ENCODE measurements at regions of chr12 and their contacts with region 1.

Region 1: DNA sequence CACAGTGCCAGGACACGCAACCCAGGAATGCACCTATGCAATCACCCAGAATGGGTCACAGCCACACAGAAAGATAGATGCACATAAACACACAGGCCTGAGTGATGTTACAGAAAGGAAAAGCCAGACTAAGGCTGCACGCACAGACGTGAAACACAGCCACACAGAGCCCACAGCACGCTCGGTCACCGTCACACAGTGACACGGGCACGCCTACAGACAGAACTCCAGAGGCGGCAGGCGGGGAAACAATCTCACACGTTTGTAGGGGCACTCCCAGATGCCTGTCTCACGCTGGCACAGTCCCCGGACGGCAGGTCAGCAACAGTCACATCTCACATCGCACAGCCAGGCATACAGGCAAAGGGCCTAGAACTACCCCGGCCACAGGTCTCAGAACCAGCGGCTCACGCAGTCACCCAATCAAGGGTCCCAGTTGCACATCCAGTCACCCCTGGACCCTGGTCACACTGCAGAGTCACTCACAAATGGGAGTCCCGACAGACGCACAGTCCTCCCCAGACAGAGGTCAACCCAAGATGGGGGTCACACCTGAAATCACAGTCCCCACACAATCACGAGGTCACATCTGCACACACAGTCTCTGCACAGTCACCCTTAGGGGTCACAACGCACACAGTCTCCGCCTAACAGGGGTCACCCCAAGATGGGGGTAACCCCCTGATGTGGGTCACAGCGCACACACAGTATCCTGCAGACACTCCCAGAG is 790 bp downstream of the SSH1 start:
- DNase-seq: peak; percentile 52 to 87 (median 59)
- H3K4me3 ChIP-seq: peak overlapping the region; percentile 54 to 74
- H3K4me3 Mint-ChIP-seq: peak overlapping the region; percentile 93 to 98 (median 96)
- H3K27ac ChIP-seq: peak overlapping the region; percentile 67
- H3K27ac Mint-ChIP-seq: peak overlapping the region; percentile 83 to 99 (median 96)
- H3K4me1 ChIP-seq: peaks cover 30% of the 10 kb centered on the region
- H3K4me1 Mint-ChIP-seq: peaks cover 30 to 45% (median 38%) of the 10 kb centered on the region in 4 donors
- H3K27me3 ChIP-seq: no peaks in the 10 kb centered on the region
- H3K27me3 Mint-ChIP-seq: no peaks in the 10 kb centered on the region

Region 2: DNA sequence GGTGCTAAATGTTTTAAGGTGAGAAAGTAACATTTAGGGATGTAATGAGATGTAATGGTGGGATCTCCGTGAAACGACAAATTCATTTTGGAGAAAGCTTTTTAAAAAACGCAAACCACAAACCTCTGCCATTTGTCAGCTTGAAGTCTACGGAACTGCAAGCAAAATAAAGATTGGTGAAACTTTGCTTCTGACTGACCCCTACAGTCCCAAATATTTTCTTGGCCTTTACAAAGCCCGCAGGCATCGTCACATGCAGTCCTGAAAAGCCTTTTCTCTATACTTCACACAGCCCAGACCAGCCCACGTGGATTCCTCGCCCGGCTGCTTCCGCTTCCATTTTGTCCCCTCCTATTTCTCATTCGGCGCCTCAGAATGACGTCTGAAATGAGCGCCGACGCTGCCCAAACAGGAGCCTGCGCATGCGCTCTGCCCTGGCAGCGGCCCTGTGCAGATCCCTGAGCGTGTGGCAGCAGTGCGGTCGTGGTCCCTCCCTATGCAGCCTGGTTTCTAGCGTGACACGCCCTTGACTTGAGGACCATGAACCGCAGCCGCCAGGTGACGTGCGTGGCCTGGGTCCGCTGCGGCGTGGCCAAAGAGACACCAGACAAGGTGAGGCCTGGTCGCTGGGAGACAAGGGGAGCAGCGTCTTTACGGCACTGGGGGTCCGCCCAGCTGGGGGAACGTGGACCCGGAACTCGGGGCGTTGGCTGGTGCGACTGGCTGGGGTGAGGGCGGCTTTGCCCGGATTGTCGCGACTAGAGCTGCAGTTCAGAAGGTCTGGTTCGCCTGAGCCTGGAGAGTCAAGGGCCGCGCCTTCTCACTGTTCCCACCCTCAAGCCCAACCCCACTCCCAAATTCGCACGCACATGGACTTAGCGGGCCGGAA is 1171.0 kb before region 1 on chr12 and contains the start of gene PWP1:
- CTCF ChIA-PET with region 1: no interaction called
- POLR2A ChIA-PET with region 1: no interaction called
- intact Hi-C with region 1: loop called (anchors 5 kb)
- DNase-seq: peak; percentile 94 to 97 (median 95)
- H3K4me3 ChIP-seq: peak within 1 kb of the TSS; percentile 94 to 98
- H3K4me3 Mint-ChIP-seq: peak within 1 kb of the TSS; percentile 96 to 99 (median 97)
- H3K27ac ChIP-seq: peak within 1 kb of the TSS; percentile 78
- H3K27ac Mint-ChIP-seq: peak within 1 kb of the TSS; percentile 94 to 100 (median 98)
- H3K4me1 ChIP-seq: peaks cover 25% of the 10 kb centered on the region
- H3K4me1 Mint-ChIP-seq: peaks cover 14 to 37% (median 26%) of the 10 kb centered on the region in 4 donors
- H3K27me3 ChIP-seq: no peaks in the 10 kb centered on the region
- H3K27me3 Mint-ChIP-seq: no peaks in the 10 kb centered on the region
- total RNA-seq, gene PWP1: 24.3 to 25.6 TPM

Region 3: GRCh38 chr12:108633534-108634248 is 222.9 kb before region 1 on chr12 and contains the start of gene SELPLG:
- CTCF ChIA-PET with region 1: no interaction called
- POLR2A ChIA-PET with region 1: interaction called, 21 read pairs
- intact Hi-C with region 1: loop called (anchors 2 kb)
- DNase-seq: peak; percentile 91 to 97 (median 94)
- H3K4me3 ChIP-seq: peak within 1 kb of the TSS; percentile 92 to 95
- H3K4me3 Mint-ChIP-seq: peak within 1 kb of the TSS; percentile 94 to 100 (median 99)
- H3K27ac ChIP-seq: peak within 1 kb of the TSS; percentile 92
- H3K27ac Mint-ChIP-seq: peak within 1 kb of the TSS; percentile 99 to 100 (median 100)
- H3K4me1 ChIP-seq: peaks cover 65% of the 10 kb centered on the region
- H3K4me1 Mint-ChIP-seq: peaks cover 40 to 84% (median 54%) of the 10 kb centered on the region in 4 donors
- H3K27me3 ChIP-seq: no peaks in the 10 kb centered on the region
- H3K27me3 Mint-ChIP-seq: no peaks in the 10 kb centered on the region
- total RNA-seq, gene SELPLG: 175 to 176 TPM

Region 4: GRCh38 chr12:108838194-108839017 is 18.2 kb before region 1 on chr12:
- CTCF ChIA-PET with region 1: interaction called, 6 read pairs
- POLR2A ChIA-PET with region 1: interaction called, 41 read pairs
- intact Hi-C with region 1: loop called (anchors 1 kb)
- DNase-seq: peak; percentile 26 to 78 (median 38)
- H3K4me3 ChIP-seq: no peak overlapping the region
- H3K4me3 Mint-ChIP-seq: peak overlapping the region in 7 of 8 donors; percentile 67 to 89 (median 78)
- H3K27ac ChIP-seq: peak overlapping the region; percentile 42
- H3K27ac Mint-ChIP-seq: peak overlapping the region; percentile 61 to 96 (median 90)
- H3K4me1 ChIP-seq: peaks cover 31% of the 10 kb centered on the region
- H3K4me1 Mint-ChIP-seq: peaks cover 20 to 46% (median 33%) of the 10 kb centered on the region in 4 donors
- H3K27me3 ChIP-seq: no peaks in the 10 kb centered on the region
- H3K27me3 Mint-ChIP-seq: no peaks in the 10 kb centered on the region

Region 5: DNA sequence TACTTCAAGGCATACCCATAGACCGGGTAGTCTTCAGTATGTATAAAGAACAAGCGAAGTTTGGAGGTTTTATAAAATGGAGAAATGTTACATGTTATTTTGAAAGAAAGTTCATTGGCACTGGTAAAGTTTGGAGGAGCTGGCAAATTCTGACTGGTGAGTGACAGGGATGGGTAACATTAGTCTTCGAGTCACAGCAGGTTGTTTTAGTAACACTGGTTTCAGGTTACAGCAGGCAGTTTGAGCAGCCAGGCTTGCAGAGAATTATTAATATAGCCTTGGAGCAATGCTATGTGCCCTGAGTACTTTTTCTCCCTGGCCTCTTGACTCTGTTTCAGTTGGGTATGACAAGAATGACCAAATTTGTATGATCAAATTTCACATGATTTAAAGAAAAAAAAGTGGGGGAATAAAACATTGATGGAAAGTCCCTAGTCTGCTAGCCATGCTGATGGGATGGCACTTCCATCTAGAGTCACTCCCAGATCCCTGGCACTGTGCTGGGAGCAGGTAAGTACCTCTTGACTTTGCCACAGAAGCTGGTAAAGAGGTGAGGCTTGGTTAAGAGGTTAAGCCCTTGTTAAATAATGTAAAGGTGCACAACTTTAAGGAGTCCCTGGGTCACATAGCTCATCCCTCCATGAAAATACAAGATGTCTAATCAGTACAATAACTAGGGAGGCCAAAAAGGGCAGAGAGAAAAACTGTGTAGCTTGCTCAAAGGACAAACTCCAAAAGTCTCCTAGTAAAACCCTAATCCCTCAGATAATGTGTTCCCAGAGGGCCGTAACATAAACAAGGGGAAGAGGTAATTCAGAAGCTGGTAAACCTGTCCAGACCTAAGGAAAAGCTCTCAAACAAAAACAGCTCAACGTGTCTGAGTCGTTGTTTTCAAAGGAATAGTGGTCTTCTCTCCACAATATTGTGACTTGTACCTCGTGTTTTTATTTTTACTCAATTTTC is 176.9 kb after region 1 on chr12:
- CTCF ChIA-PET with region 1: no interaction called
- POLR2A ChIA-PET with region 1: no interaction called
- intact Hi-C with region 1: no loop called
- DNase-seq: no peak
- H3K4me3 ChIP-seq: no peak overlapping the region
- H3K4me3 Mint-ChIP-seq: no peak overlapping the region
- H3K27ac ChIP-seq: no peak overlapping the region
- H3K27ac Mint-ChIP-seq: peak overlapping the region in 1 of 7 donors; percentile 3
- H3K4me1 ChIP-seq: no peaks in the 10 kb centered on the region
- H3K4me1 Mint-ChIP-seq: no peaks in the 10 kb centered on the region
- H3K27me3 ChIP-seq: no peaks in the 10 kb centered on the region
- H3K27me3 Mint-ChIP-seq: peaks cover 0 to 13% of the 10 kb centered on the region in 2 donors

Region 6: DNA sequence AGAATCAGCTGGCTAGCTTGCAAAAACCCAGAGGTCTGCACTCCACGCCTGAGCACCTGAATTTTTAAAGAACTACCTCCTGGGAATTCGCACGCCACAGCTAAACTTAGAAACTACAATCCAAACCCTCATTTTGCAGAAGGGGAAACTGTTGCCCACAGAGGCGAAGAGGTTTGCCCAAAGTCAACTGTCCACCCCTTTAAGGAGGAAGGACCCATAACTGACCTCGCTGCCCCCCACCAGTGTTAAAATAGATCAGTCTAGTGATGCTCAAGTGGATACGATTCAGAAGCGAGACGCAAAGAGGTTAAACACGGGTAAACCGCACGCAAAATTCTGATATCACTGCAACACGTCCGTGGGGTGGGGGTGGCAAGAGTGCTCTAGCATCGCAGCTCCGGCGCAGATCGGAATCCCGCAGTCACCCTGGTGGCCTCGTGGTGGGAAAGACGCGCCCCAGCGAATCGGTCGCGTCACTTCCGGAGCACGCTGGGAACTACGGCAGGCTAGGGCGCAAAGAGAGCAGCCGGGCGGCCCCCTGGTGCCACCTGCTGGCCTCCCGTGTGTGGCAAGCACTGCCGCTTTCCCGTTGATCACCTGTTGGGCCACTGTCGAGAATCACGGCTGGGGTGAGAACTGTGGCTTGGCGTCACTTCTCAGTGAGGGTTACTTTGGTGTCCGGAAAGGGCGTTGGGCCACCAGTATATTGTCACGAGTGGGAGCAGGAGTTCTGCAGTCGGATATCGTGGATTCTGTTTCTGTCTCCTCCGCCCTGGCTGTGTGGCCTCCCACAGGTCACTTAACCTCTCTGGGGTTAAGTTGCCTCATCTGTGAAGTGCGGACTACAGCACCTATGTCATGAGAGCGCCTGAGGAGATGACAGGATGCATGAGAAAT is 236.7 kb after region 1 on chr12 and contains the start of gene ALKBH2:
- CTCF ChIA-PET with region 1: no interaction called
- POLR2A ChIA-PET with region 1: interaction called, 4 read pairs
- intact Hi-C with region 1: loop called (anchors 1 kb)
- DNase-seq: peak; percentile 93 to 98 (median 95)
- H3K4me3 ChIP-seq: peak within 1 kb of the TSS; percentile 62 to 75
- H3K4me3 Mint-ChIP-seq: peak within 1 kb of the TSS; percentile 84 to 91 (median 86)
- H3K27ac ChIP-seq: peak within 1 kb of the TSS; percentile 60
- H3K27ac Mint-ChIP-seq: peak within 1 kb of the TSS; percentile 86 to 97 (median 95)
- H3K4me1 ChIP-seq: peaks cover 27% of the 10 kb centered on the region
- H3K4me1 Mint-ChIP-seq: peaks cover 21 to 56% (median 34%) of the 10 kb centered on the region in 4 donors
- H3K27me3 ChIP-seq: no peaks in the 10 kb centered on the region
- H3K27me3 Mint-ChIP-seq: no peaks in the 10 kb centered on the region
- total RNA-seq, gene ALKBH2: 12.9 to 14.4 TPM

Region 7: GRCh38 chr12:109573029-109573913 is 716.7 kb after region 1 on chr12 and contains the starts of genes MMAB and MVK:
- CTCF ChIA-PET with region 1: no interaction called
- POLR2A ChIA-PET with region 1: no interaction called
- intact Hi-C with region 1: loop called (anchors 10 kb)
- DNase-seq: peak; percentile 99 to 100 (median 99)
- H3K4me3 ChIP-seq: peak within 1 kb of the TSS; percentile 73 to 82
- H3K4me3 Mint-ChIP-seq: peak within 1 kb of the TSS; percentile 91 to 95 (median 92)
- H3K27ac ChIP-seq: peak within 1 kb of the TSS; percentile 92
- H3K27ac Mint-ChIP-seq: peak within 1 kb of the TSS; percentile 91 to 99 (median 98)
- H3K4me1 ChIP-seq: peaks cover 19% of the 10 kb centered on the region
- H3K4me1 Mint-ChIP-seq: peaks cover 18 to 28% (median 22%) of the 10 kb centered on the region in 4 donors
- H3K27me3 ChIP-seq: no peaks in the 10 kb centered on the region
- H3K27me3 Mint-ChIP-seq: no peaks in the 10 kb centered on the region
- total RNA-seq, gene MMAB: 16.0 to 16.9 TPM
- total RNA-seq, gene MVK: 10.0 to 11.0 TPM

Measured in CD4-positive, alpha-beta memory T cell (primary cell).